ENCODE measurements at regions of chr12 and their contacts with region 1.

Region 1: GRCh38 chr12:76031537-76032073 is at the start of gene PHLDA1:
- DNase-seq: peak; percentile 97
- ATAC-seq: peak; percentile 81
- H3K4me3 ChIP-seq: peak within 1 kb of the TSS; percentile 98
- H3K27ac ChIP-seq: peak within 1 kb of the TSS; percentile 98
- H3K4me1 ChIP-seq: peaks cover 7% of the 10 kb centered on the region
- H3K27me3 ChIP-seq: no peaks in the 10 kb centered on the region
- CTCF ChIP-seq: peak; percentile 74
- POLR2A ChIP-seq: peak; percentile 100
- RAD21 ChIP-seq: peak; percentile 73
- total RNA-seq, gene PHLDA1: 27.8 and 47.8 TPM in 2 replicates

Region 2: GRCh38 chr12:75526655-75527511 is 504.7 kb before region 1 on chr12:
- CTCF ChIA-PET with region 1: interaction called, 8 read pairs
- POLR2A ChIA-PET with region 1: interaction called, 3 read pairs
- dilution Hi-C with region 1: no loop called
- in situ Hi-C with region 1: loop called (anchors 5 kb)
- intact Hi-C with region 1: loop called (anchors 1 kb)
- DNase-seq: peak; percentile 84
- ATAC-seq: peak; percentile 78
- H3K4me3 ChIP-seq: no peak overlapping the region
- H3K27ac ChIP-seq: peak overlapping the region; percentile 98
- H3K4me1 ChIP-seq: peaks cover 11% of the 10 kb centered on the region
- H3K27me3 ChIP-seq: no peaks in the 10 kb centered on the region
- CTCF ChIP-seq: peak; percentile 82
- POLR2A ChIP-seq: no peak
- RAD21 ChIP-seq: peak; percentile 92

Region 3: DNA sequence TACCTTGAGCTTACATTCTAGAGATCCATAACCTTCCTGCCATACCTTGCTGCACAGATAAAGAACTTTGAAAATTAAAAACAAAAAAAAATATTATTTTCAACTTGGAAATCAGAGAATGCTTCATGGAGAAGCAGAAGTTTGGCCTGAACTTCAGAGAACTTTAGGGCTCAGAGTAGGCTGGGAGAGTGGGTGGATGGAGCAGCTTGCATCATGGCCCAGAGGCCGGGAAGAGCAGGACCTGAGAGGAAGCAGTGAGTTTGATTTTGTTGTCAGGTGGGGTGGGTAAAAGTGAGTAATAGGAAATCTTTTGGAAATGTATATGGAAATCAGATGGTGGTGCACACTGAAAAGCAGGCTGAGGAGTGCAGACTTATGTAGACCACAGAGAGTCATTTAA is 291.7 kb before region 1 on chr12:
- CTCF ChIA-PET with region 1: interaction called, 3 read pairs
- POLR2A ChIA-PET with region 1: interaction called, 11 read pairs
- dilution Hi-C with region 1: no loop called
- in situ Hi-C with region 1: no loop called
- intact Hi-C with region 1: no loop called
- DNase-seq: no peak
- ATAC-seq: no peak
- H3K4me3 ChIP-seq: no peak overlapping the region
- H3K27ac ChIP-seq: no peak overlapping the region
- H3K4me1 ChIP-seq: peaks cover 8% of the 10 kb centered on the region
- H3K27me3 ChIP-seq: no peaks in the 10 kb centered on the region
- CTCF ChIP-seq: no peak
- POLR2A ChIP-seq: no peak
- RAD21 ChIP-seq: no peak

Region 4: DNA sequence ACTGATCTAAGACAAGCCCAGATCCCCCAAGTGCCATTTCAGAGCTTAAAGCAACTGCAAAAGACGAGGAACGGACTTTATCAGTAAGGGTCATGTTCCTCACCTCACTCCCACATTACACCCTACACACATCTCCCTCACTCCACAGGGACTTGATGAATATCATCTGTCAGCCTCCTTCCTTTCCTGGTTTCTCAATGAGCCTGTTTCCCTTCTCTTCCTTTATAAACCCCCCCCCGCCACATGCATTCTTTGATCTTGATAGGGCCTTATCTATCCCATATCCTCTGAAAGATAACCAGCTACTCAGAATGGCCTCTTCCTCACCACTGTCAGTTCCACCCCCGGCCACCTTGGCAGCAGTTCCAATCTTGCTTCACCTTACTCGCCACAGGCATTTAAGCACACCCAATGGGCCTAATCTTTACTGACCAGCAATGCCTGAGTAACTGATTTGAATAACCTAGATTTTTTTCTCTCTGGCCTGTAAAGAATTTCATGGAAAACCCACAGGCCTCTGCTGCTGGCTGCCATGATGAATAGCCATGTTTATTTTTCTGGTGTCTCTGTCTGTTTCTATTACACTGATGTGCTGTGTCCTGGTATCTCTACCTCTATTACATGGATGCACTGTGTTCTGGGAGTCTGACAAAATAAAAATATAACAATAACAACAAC is 138.7 kb before region 1 on chr12:
- CTCF ChIA-PET with region 1: no interaction called
- POLR2A ChIA-PET with region 1: no interaction called
- dilution Hi-C with region 1: no loop called
- in situ Hi-C with region 1: no loop called
- intact Hi-C with region 1: no loop called
- DNase-seq: peak; percentile 85
- ATAC-seq: peak; percentile 55
- H3K4me3 ChIP-seq: no peak overlapping the region
- H3K27ac ChIP-seq: no peak overlapping the region
- H3K4me1 ChIP-seq: peaks cover 7% of the 10 kb centered on the region
- H3K27me3 ChIP-seq: no peaks in the 10 kb centered on the region
- CTCF ChIP-seq: no peak
- POLR2A ChIP-seq: no peak
- RAD21 ChIP-seq: no peak

Region 5: DNA sequence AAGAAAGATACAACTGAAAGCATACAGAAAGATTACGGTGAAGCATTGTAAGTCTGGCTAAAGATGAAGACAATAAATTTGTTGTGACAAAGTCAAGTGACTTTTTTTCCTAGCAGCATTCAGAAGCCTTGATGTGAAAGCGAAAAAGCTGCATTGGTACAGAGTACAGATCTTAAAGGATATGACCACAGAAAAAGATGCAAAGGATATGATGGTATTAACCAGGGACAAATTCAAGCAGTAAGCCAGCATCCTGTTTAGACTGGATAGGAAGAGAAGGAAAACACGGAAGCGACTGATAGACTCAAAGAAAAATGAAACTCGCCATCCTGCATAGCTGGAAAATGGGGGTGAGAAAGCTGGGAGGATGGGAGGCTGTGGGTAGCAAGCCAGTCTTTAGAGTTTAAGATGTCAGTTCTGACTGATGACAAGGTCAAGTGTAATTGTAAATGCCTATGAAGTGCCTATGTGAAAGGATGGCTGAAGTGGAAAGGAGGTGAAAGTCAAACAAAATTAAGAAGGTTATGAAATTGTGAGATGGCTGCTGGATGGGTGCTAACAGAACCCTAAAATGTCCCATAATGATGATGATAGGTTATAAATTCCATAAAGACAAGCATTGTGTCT is 92.5 kb before region 1 on chr12:
- CTCF ChIA-PET with region 1: no interaction called
- POLR2A ChIA-PET with region 1: no interaction called
- dilution Hi-C with region 1: no loop called
- in situ Hi-C with region 1: no loop called
- intact Hi-C with region 1: loop called (anchors 5 kb)
- DNase-seq: peak; percentile 32
- ATAC-seq: no peak
- H3K4me3 ChIP-seq: no peak overlapping the region; the same call in 1 of the 2 replicates
- H3K27ac ChIP-seq: peak overlapping the region; percentile 9
- H3K4me1 ChIP-seq: peaks cover 14% of the 10 kb centered on the region
- H3K27me3 ChIP-seq: no peaks in the 10 kb centered on the region
- CTCF ChIP-seq: no peak
- POLR2A ChIP-seq: no peak
- RAD21 ChIP-seq: no peak